CD4-positive, alpha-beta T cell (primary cell): ENCODE measurements at regions of chr11 and their contacts with region 1.

Region 1: GRCh38 chr11:107457558-107458271 is at the start of gene CWF19L2:
- DNase-seq: peak; percentile 74 to 97 (median 86)
- ATAC-seq: peak; percentile 92
- H3K4me3 ChIP-seq: peak within 1 kb of the TSS; percentile 92
- H3K4me3 Mint-ChIP-seq: peak within 1 kb of the TSS; percentile 91
- H3K27ac ChIP-seq: peak within 1 kb of the TSS; percentile 73 to 79
- H3K27ac Mint-ChIP-seq: peak within 1 kb of the TSS; percentile 82
- H3K4me1 ChIP-seq: peaks cover 7% of the 10 kb centered on the region
- H3K4me1 Mint-ChIP-seq: peaks cover 37% of the 10 kb centered on the region
- H3K27me3 ChIP-seq: no peaks in the 10 kb centered on the region
- H3K27me3 Mint-ChIP-seq: peaks cover 5% of the 10 kb centered on the region
- CTCF ChIP-seq: no peak
- total RNA-seq, gene CWF19L2: 21.2 to 21.8 TPM

Region 2: GRCh38 chr11:107538821-107539220 is 81.1 kb after region 1 on chr11:
- CTCF ChIA-PET with region 1: no interaction called
- POLR2A ChIA-PET with region 1: no interaction called
- intact Hi-C with region 1: no loop called
- DNase-seq: no peak
- ATAC-seq: no peak
- H3K4me3 ChIP-seq: no peak overlapping the region
- H3K4me3 Mint-ChIP-seq: no peak overlapping the region
- H3K27ac ChIP-seq: no peak overlapping the region
- H3K27ac Mint-ChIP-seq: no peak overlapping the region
- H3K4me1 ChIP-seq: no peaks in the 10 kb centered on the region
- H3K4me1 Mint-ChIP-seq: no peaks in the 10 kb centered on the region
- H3K27me3 ChIP-seq: no peaks in the 10 kb centered on the region
- H3K27me3 Mint-ChIP-seq: no peaks in the 10 kb centered on the region
- CTCF ChIP-seq: no peak

Region 3: DNA sequence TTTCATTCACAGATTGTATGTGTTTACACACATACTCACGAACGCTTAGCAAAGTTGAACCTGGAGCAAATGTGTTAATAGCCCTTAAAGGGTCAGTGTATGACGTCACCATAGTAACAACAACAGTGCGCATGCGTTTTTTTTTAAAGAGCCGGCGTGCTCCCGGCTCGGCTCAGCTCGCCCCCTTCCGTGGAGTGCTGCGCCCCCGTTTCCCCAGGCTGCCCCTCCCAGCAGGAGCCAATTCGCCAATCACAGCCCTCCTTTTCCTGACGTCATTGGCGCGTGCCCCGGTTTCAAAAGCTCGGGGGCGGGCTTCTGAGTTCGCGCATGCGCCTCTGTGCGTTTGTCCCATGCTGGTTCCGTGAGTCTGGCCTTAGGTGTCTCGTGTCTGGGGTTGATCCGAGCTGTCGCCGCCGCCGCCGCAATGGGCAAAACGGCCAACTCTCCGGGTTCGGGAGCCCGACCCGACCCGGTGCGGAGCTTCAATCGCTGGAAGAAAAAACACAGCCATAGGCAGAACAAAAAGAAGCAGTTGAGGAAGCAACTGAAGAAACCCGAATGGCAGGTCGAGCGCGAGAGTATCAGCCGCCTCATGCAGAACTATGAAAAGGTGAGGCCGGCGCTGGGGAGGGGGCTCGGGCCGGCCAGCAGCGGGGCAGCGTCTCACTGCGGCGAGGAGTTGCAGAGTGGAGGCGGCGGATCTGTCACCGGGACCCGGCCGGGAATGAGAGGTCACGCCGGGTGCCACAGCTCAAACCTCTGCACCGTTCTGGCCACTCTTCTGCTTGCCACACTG is 1207.2 kb after region 1 on chr11 and contains the start of gene DDX10:
- CTCF ChIA-PET with region 1: no interaction called
- POLR2A ChIA-PET with region 1: no interaction called
- intact Hi-C with region 1: loop called in 1 of 2 experiments (anchors 10 kb)
- DNase-seq: peak; percentile 96 to 99 (median 98)
- ATAC-seq: peak; percentile 99
- H3K4me3 ChIP-seq: peak within 1 kb of the TSS; percentile 72
- H3K4me3 Mint-ChIP-seq: peak within 1 kb of the TSS; percentile 98
- H3K27ac ChIP-seq: peak within 1 kb of the TSS; percentile 32 to 55
- H3K27ac Mint-ChIP-seq: peak within 1 kb of the TSS; percentile 89
- H3K4me1 ChIP-seq: peaks cover 19% of the 10 kb centered on the region
- H3K4me1 Mint-ChIP-seq: peaks cover 42% of the 10 kb centered on the region
- H3K27me3 ChIP-seq: no peaks in the 10 kb centered on the region
- H3K27me3 Mint-ChIP-seq: no peaks in the 10 kb centered on the region
- CTCF ChIP-seq: no peak
- total RNA-seq, gene DDX10: 15.0 to 15.4 TPM